AG04449 (cell line): ENCODE measurements at regions of chr15 and their contacts with region 1.

Region 1: GRCh38 chr15:41904541-41905005 is 10.7 kb upstream of the SPTBN5 start:
- DNase-seq: no peak
- H3K4me3 ChIP-seq: no peak overlapping the region
- CTCF ChIP-seq: peak; percentile 91

Region 2: GRCh38 chr15:41746802-41747201 is 157.8 kb before region 1 on chr15:
- CTCF ChIA-PET with region 1: no interaction called
- POLR2A ChIA-PET with region 1: no interaction called
- DNase-seq: no peak
- H3K4me3 ChIP-seq: no peak overlapping the region
- CTCF ChIP-seq: no peak

Region 3: GRCh38 chr15:41827880-41828806 is 76.4 kb before region 1 on chr15 and contains the start of gene JMJD7:
- CTCF ChIA-PET with region 1: interaction called, 11 read pairs
- POLR2A ChIA-PET with region 1: no interaction called
- DNase-seq: peak; percentile 17
- H3K4me3 ChIP-seq: peak within 1 kb of the TSS; percentile 93
- CTCF ChIP-seq: no peak

Region 4: GRCh38 chr15:41917767-41918430 is 13.3 kb after region 1 on chr15:
- CTCF ChIA-PET with region 1: interaction called, 91 read pairs
- POLR2A ChIA-PET with region 1: no interaction called
- DNase-seq: no peak
- H3K4me3 ChIP-seq: no peak overlapping the region
- CTCF ChIP-seq: no peak